ENCODE measurements at regions of chr9 and their contacts with region 1.

Region 1: DNA sequence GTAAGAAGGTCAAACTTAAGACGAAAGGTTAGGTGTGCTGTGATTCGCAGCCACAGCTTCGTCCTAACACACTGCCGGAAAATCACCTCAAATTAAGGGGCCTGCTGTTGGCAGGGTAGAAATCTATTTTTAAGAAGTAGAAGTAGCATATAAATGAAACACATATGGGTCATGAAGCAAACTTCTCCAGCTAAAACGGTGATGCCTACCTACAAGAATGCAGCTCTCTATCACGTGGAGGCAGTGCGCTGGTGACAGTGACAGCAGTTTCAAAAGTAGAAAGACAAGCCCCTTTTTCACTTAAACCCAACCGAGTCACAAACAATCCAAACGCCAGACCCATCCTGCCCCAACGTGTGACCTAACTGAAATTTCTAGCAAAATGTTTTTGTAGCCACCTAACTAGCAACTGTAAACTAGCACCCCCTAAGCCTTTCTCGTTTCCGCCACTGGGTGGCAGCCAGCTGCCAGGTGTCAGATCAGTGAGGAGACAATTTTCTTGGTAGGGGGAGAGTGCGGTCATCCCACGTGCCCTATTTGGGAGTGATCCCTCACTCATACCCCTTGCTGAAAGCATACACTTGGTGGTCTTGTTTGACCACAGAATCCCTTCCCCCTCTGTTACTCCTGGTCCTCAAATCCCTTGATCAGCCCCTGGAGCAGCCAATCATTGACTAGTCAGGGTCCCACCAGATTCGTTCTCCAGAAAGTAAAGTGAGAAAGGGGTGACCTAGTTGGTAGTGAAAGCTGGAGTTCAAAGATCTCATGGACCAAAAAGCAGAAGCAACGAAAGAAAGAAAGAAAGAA is 71.8 kb upstream of the MAMDC2 start:
- DNase-seq: peak; percentile 80

Region 2: GRCh38 chr9:70111042-70111602 is 139.3 kb after region 1 on chr9:
- intact Hi-C with region 1: loop called (anchors 2 kb)
- DNase-seq: peak; percentile 83

Region 3: GRCh38 chr9:70229579-70229978 is 257.7 kb after region 1 on chr9:
- intact Hi-C with region 1: loop called (anchors 5 kb)
- DNase-seq: no peak

Measured in cardiac septum (tissue), 1 donor.